Cardiac septum (tissue), 1 donor: ENCODE measurements at regions of chr17 and their contacts with region 1.

Region 1: DNA sequence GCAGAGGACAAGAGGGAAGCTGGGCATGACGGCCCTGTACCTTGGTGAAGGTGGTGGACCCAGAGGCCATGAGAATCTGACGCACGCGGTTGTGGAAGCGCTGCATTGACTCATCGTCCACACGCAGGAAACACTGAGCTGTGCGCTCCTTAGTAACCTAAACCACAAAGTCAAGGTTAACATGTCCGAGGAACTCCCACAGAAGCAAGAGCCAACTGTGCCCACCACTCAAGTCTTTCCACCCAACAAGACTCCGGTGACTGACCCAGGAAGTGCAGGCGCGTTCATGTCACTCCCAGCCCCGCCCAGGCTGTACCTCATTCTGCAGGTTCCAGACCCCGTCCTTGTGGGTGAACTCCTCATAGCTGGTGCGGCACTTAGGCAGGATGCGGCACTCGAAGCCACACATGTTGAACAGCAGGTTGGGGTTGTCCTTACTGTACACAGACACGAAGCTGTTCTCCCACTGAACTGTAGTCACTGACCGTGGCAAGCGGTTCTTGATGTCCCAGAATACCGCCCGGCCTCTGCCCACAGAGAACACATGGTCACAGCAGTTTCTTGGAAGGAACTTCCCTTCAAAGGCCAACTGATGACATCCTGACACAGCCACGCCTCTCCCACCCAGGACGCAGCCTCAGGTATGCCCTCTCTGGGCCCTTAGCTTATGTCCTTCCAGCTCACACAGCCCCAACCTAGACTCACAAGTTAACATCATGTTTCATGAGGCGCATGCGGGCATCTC is 11.5 kb downstream of the PRPF8 start:
- DNase-seq: no peak

Region 2: GRCh38 chr17:1783834-1784611 is 110.8 kb after region 1 on chr17:
- intact Hi-C with region 1: loop called (anchors 5 kb)
- DNase-seq: peak; percentile 83